Psoas muscle (tissue), 8 donors: ENCODE measurements at regions of chr5 and their contacts with region 1.

Region 1: DNA sequence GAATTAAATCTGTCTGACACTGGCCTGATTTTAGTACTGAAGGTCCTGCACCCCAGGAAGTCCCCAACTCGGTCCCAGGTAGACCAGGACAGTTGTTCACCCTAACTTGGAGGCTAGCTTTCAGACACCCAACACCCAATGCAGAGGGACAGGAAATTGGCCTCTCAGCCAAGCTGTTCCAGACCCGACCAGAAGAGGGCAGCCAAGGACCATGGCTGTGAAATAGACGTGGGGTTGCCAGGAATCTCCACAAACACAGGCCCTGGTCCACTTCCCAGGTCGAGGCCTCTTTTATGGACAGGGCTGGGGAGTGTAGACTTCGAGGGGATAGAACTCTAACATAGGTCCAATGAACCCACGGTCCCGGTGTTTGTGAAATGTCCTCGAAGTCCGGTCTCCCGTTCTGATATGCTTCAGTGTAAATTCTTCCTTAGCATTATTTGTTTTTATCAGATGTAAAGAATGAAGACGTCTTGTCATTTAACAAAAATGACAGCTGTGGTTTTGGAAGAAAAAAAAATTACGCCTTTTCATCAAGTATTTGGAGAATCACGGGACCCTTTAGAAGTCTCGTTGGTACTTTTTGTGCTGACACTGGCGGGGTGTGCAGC is 260.3 kb upstream of the ADAMTS16 start:
- DNase-seq: peak; percentile 70 to 81
- ATAC-seq: peak; percentile 88 to 93 (median 90)
- H3K4me3 ChIP-seq: no peak overlapping the region
- H3K27ac ChIP-seq: no peak overlapping the region
- H3K4me1 ChIP-seq: no peaks in the 10 kb centered on the region
- H3K27me3 ChIP-seq: no peaks in the 10 kb centered on the region
- CTCF ChIP-seq: peak; percentile 92

Region 2: GRCh38 chr5:4700069-4700468 is 179.7 kb before region 1 on chr5:
- intact Hi-C with region 1: no loop called
- DNase-seq: peak; percentile 37 to 60
- ATAC-seq: no peak
- H3K4me3 ChIP-seq: no peak overlapping the region
- H3K27ac ChIP-seq: no peak overlapping the region
- H3K4me1 ChIP-seq: no peaks in the 10 kb centered on the region
- H3K27me3 ChIP-seq: no peaks in the 10 kb centered on the region
- CTCF ChIP-seq: no peak

Region 3: GRCh38 chr5:4941957-4942830 is 62.4 kb after region 1 on chr5:
- intact Hi-C with region 1: loop called (anchors 5 kb)
- DNase-seq: peak in 1 of 2 donors; percentile 57
- ATAC-seq: no peak
- H3K4me3 ChIP-seq: no peak overlapping the region
- H3K27ac ChIP-seq: no peak overlapping the region
- H3K4me1 ChIP-seq: no peaks in the 10 kb centered on the region
- H3K27me3 ChIP-seq: peaks cover 0 to 4% (median 0%) of the 10 kb centered on the region in 3 donors
- CTCF ChIP-seq: peak; percentile 61

Region 4: GRCh38 chr5:5011151-5011550 is 131.4 kb after region 1 on chr5:
- intact Hi-C with region 1: no loop called
- DNase-seq: no peak
- ATAC-seq: no peak
- H3K4me3 ChIP-seq: no peak overlapping the region
- H3K27ac ChIP-seq: no peak overlapping the region
- H3K4me1 ChIP-seq: no peaks in the 10 kb centered on the region
- H3K27me3 ChIP-seq: no peaks in the 10 kb centered on the region
- CTCF ChIP-seq: no peak

Region 5: GRCh38 chr5:5419294-5420210 is 539.8 kb after region 1 on chr5:
- intact Hi-C with region 1: loop called (anchors 2 to 10 kb)
- DNase-seq: no peak
- ATAC-seq: no peak
- H3K4me3 ChIP-seq: no peak overlapping the region
- H3K27ac ChIP-seq: no peak overlapping the region
- H3K4me1 ChIP-seq: peaks cover 21% of the 10 kb centered on the region
- H3K27me3 ChIP-seq: no peaks in the 10 kb centered on the region
- CTCF ChIP-seq: peak; percentile 76